ENCODE measurements at regions of chr6 and their contacts with region 1.

Region 1: GRCh38 chr6:138765896-138766655 is 7.5 kb upstream of the CCDC28A start:
- DNase-seq: peak; percentile 61
- H3K4me3 ChIP-seq: no peak overlapping the region
- H3K27ac ChIP-seq: no peak overlapping the region
- H3K4me1 ChIP-seq: no peaks in the 10 kb centered on the region
- H3K27me3 ChIP-seq: no peaks in the 10 kb centered on the region
- CTCF ChIP-seq: peak; percentile 70

Region 2: GRCh38 chr6:138001750-138002349 is 764.2 kb before region 1 on chr6:
- CTCF ChIA-PET with region 1: no interaction called
- POLR2A ChIA-PET with region 1: no interaction called
- intact Hi-C with region 1: loop called (anchors 10 kb)
- DNase-seq: peak; percentile 51
- H3K4me3 ChIP-seq: no peak overlapping the region
- H3K27ac ChIP-seq: no peak overlapping the region
- H3K4me1 ChIP-seq: no peaks in the 10 kb centered on the region
- H3K27me3 ChIP-seq: peaks cover 3% of the 10 kb centered on the region
- CTCF ChIP-seq: peak; percentile 91

Region 3: GRCh38 chr6:138287144-138287955 is 478.7 kb before region 1 on chr6:
- CTCF ChIA-PET with region 1: no interaction called
- POLR2A ChIA-PET with region 1: no interaction called
- intact Hi-C with region 1: loop called (anchors 10 kb)
- DNase-seq: peak; percentile 28
- H3K4me3 ChIP-seq: no peak overlapping the region
- H3K27ac ChIP-seq: no peak overlapping the region
- H3K4me1 ChIP-seq: no peaks in the 10 kb centered on the region
- H3K27me3 ChIP-seq: no peaks in the 10 kb centered on the region
- CTCF ChIP-seq: peak; percentile 67

Region 4: GRCh38 chr6:138428944-138429598 is 337.0 kb before region 1 on chr6:
- CTCF ChIA-PET with region 1: no interaction called
- POLR2A ChIA-PET with region 1: no interaction called
- intact Hi-C with region 1: loop called (anchors 1 kb)
- DNase-seq: peak; percentile 70
- H3K4me3 ChIP-seq: no peak overlapping the region
- H3K27ac ChIP-seq: no peak overlapping the region
- H3K4me1 ChIP-seq: no peaks in the 10 kb centered on the region
- H3K27me3 ChIP-seq: no peaks in the 10 kb centered on the region
- CTCF ChIP-seq: peak; percentile 74

Region 5: GRCh38 chr6:138588805-138589434 is 177.2 kb before region 1 on chr6:
- CTCF ChIA-PET with region 1: no interaction called
- POLR2A ChIA-PET with region 1: no interaction called
- intact Hi-C with region 1: loop called (anchors 1 kb)
- DNase-seq: peak; percentile 89
- H3K4me3 ChIP-seq: no peak overlapping the region
- H3K27ac ChIP-seq: no peak overlapping the region
- H3K4me1 ChIP-seq: peaks cover 14% of the 10 kb centered on the region
- H3K27me3 ChIP-seq: no peaks in the 10 kb centered on the region
- CTCF ChIP-seq: peak; percentile 92

Region 6: GRCh38 chr6:138692058-138692977 is 73.8 kb before region 1 on chr6:
- CTCF ChIA-PET with region 1: no interaction called
- POLR2A ChIA-PET with region 1: interaction called, 9 read pairs
- intact Hi-C with region 1: loop called (anchors 5 kb)
- DNase-seq: peak; percentile 71
- H3K4me3 ChIP-seq: peak overlapping the region; percentile 97
- H3K27ac ChIP-seq: peak overlapping the region; percentile 93
- H3K4me1 ChIP-seq: no peaks in the 10 kb centered on the region
- H3K27me3 ChIP-seq: no peaks in the 10 kb centered on the region
- CTCF ChIP-seq: peak; percentile 78

Region 7: GRCh38 chr6:138833816-138834539 is 67.9 kb after region 1 on chr6:
- CTCF ChIA-PET with region 1: no interaction called
- POLR2A ChIA-PET with region 1: no interaction called
- intact Hi-C with region 1: no loop called
- DNase-seq: peak; percentile 30
- H3K4me3 ChIP-seq: no peak overlapping the region
- H3K27ac ChIP-seq: no peak overlapping the region
- H3K4me1 ChIP-seq: peaks cover 6% of the 10 kb centered on the region
- H3K27me3 ChIP-seq: no peaks in the 10 kb centered on the region
- CTCF ChIP-seq: no peak